Posterior vena cava (tissue), 2 donors: ENCODE measurements at regions of chr2 and their contacts with region 1.

Region 1: GRCh38 chr2:234074751-234075517 is 24.4 kb downstream of the SPP2 start:
- DNase-seq: no peak

Region 2: DNA sequence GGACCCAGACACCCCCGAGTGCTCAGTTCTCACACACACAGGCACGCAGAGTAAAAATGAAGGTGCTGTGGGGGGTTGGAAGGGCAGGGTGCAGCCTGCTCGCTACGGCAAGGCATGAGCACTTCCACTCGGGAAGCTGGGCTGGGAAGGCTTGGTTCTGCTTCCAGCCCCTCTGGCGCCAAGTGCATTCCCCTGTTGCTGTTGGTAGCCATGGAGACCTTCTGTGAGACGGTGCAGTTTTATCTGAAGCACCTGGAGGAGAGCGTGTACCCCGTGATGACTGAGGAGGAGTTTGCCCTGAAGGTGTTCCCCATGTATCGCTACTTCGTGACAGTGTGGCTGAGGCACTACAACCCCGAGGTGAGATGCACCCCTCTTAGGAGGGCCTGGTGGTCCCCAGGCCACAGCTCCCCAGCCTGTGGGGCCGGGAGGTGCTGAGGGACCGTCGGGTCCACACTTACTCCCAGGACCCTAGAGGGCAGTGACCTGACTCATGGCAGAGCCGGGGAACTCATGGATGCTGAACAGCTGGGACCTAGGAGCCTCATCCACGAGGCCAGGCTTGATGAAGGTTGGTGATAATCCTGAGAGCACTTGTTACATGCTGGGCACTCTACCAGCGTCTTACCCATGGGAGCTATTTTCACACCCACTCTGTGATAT is 281.3 kb before region 1 on chr2:
- intact Hi-C with region 1: loop called in 1 of 2 experiments (anchors 5 kb)
- DNase-seq: no peak